Uterus (tissue), 4 donors: ENCODE measurements at regions of chr3 and their contacts with region 1.

Region 1: DNA sequence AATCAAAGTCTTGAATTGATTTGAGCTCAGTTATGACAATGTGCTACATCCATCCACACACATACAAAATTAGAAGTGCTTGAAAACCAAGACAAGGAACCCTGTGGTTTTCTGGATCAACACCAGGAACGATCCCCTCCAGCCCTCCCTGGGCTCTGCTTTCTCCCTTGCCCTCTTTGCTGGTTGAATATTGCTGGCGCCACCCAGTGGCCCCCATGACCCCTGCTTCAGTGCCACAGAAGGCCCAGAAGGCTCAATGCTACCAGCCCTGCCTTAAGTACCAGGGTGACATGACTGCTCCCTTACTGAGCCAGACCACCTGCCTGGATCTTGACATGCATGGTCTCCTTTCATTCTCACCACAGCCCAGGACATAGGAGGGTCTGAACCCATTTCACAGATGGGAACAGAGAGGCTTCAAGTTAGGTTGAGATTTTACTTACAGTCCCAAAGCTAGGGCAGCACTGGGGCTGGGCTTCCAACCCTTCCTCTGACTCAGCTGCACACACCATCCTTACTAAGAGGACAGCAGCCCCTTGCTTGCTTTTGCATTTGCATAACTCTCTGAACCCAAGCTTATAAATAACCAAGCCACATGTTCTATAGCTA is 15.0 kb downstream of the IL12A start:
- DNase-seq: no peak
- H3K4me3 ChIP-seq: no peak overlapping the region
- H3K27ac ChIP-seq: no peak overlapping the region
- H3K4me1 ChIP-seq: no peaks in the 10 kb centered on the region
- H3K27me3 ChIP-seq: no peaks in the 10 kb centered on the region
- CTCF ChIP-seq: peak in 2 of 4 experiments; percentile 10 to 22
- POLR2A ChIP-seq: no peak

Region 2: DNA sequence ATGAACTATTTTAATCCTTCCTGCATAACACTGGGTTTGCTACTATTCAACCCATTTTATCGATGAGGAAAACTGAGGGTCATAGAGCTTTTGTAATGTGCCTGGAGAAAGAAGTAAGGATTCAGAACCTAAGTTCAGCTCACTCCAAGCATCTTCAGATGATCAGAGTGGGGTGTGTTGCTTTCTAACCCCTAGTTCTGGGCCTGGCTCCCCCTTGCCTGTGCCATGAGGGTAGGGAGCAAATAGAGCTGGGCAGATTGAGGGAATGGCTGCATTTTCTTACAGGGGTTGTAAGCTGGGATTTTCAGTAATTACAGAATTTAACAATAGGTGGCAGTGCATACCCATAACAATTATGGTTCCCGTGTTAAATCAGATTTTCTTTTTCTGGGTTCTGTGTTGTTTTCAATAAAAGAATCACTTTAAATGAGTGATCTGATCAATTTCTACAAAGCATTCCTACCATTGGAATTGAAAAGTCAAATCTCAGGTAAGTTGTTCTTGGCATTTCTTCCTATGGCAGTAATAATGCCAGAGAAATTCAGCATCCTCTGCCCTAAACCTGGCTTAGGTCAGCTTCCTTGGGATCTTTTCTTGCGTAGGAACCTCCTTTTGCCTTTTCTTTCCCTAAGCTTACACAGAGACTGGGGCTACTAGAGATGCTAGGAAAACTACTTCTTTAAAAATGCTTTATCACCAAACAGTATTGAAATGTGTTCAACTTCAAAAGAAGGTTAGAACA is 118.8 kb before region 1 on chr3:
- intact Hi-C with region 1: loop called (anchors 10 kb)
- DNase-seq: no peak
- H3K4me3 ChIP-seq: no peak overlapping the region
- H3K27ac ChIP-seq: no peak overlapping the region
- H3K4me1 ChIP-seq: peaks cover 0 to 4% of the 10 kb centered on the region in 2 donors
- H3K27me3 ChIP-seq: no peaks in the 10 kb centered on the region
- CTCF ChIP-seq: peak; percentile 35 to 64 (median 51)
- POLR2A ChIP-seq: no peak